ENCODE measurements at regions of chr14 and their contacts with region 1.

Region 1: GRCh38 chr14:78022059-78022458 is 148.1 kb upstream of the NRXN3 start:
- DNase-seq: peak in 5 of 10 donors; percentile 27 to 49 (median 38)
- H3K4me3 ChIP-seq: peak overlapping the region in 1 of 59 donors; percentile 21
- H3K27ac ChIP-seq: peak overlapping the region in 2 of 59 donors; percentile 15 to 35
- H3K27me3 ChIP-seq: no peaks in the 10 kb centered on the region
- CTCF ChIP-seq: peak in 55 of 56 donors; percentile 19 to 70 (median 49)

Region 2: DNA sequence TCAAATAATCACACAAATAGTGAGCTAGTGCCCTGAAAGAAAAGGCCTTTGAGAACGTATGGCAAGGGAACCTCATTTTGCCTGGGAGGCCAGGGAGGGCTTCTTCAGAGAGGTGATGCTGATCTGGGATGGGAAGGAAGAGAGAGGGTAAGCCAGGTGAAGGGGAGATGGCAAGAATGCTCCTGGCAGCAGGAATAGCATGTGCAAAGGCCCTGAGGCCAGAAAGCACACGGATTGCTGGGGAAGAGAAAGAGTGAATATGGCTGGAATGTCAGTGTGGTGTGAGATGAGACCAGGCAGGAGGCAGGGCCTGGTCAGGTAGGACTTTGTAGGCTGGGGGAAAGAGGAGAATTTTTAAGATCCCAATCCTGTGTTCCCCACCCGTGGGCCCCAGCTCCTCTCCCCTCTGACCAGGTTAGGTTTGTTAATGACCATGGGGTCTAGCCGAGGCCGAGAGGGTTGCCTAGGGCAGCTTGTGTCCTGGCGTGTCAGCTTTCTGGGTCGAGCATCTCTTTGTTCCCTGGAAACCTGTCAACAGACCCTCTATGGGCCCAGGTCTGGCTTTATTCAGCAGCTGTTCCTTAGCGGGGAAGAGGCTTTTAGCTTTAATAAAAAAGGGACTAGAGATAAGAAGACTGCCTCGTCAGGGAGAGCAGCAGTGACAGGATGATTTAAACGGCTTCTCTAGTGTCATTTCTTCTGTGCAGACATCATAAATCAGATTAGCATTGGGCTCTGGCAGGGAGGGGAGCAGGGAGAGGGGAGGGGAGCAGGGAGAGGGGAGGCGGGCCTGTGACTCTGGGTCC is 98.7 kb before region 1 on chr14:
- intact Hi-C with region 1: no loop called
- DNase-seq: no peak
- H3K4me3 ChIP-seq: no peak overlapping the region
- H3K27ac ChIP-seq: no peak overlapping the region
- H3K27me3 ChIP-seq: no peaks in the 10 kb centered on the region
- CTCF ChIP-seq: no peak

Region 3: DNA sequence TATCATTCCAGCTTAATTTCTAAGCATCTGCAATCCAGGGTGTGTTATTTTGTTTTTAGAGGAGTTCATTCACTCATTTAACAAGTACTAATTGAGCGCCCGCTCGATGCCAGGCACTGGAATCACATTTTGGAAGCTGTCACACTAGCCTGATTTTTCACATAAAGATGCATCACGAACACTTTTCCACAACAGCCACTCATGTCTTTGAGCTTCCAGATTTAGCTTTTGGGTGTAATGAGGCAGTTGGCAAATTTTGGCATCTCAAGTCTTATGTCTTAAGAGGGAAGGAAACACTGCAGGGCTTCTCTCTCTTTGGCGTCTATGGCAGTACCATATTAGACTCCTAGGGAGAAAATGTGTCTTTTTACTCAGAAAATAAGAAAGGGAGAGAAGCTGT is 162.1 kb after region 1 on chr14:
- intact Hi-C with region 1: no loop called
- DNase-seq: no peak
- H3K4me3 ChIP-seq: no peak overlapping the region
- H3K27ac ChIP-seq: no peak overlapping the region
- H3K27me3 ChIP-seq: no peaks in the 10 kb centered on the region
- CTCF ChIP-seq: no peak

Region 4: DNA sequence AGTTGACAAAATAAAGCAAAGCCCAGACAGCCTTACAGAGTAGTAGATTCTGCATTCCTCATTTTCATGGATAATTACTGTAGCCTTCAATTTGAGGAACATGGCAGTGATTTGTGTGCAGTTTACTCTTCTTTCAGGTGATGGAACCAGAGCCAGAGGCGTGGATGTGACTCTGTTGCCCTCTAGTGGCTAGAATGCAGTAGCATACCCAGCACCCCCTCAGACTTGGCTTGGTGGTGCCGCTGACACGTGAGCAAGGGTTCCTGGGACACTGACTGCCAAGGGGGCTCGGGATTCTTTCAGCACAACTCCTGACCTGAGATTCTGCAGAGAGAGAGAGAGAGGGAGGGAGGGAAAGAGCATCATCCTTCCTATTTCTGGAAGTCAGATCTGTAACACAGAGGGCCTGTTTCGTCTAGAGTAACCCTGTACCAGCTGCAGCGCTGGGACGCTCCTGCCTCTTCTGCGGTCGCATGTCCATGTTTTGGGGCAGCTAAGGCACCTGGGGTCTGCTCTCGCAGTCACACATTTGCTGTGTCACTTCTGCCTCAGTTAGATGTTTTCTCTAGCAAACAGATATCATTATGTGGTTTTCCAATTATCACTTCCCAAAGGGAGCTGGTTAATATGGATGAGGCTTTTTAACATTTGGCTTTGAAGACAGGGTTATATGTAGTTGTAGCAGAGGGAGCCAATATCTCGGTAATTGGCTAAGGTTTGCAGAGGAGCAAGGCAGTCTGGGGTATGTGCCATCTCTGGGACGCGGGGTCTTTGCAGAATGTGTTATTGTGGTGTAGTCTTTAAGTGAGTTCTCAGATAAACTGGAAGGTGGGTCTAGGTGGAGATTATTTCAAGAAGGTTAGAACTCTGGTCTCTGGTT is 576.2 kb after region 1 on chr14:
- intact Hi-C with region 1: loop called in 1 of 2 experiments (anchors 10 kb)
- DNase-seq: peak; percentile 30 to 74 (median 64)
- H3K4me3 ChIP-seq: peak overlapping the region in 35 of 59 donors; percentile 1 to 58 (median 30)
- H3K27ac ChIP-seq: peak overlapping the region in 28 of 59 donors; percentile 1 to 68 (median 36)
- H3K27me3 ChIP-seq: no peaks in the 10 kb centered on the region
- CTCF ChIP-seq: peak; percentile 54 to 94 (median 88)

Measured in dorsolateral prefrontal cortex (tissue), 120 donors.